ENCODE measurements at regions of chr11 and their contacts with region 1.

Region 1: DNA sequence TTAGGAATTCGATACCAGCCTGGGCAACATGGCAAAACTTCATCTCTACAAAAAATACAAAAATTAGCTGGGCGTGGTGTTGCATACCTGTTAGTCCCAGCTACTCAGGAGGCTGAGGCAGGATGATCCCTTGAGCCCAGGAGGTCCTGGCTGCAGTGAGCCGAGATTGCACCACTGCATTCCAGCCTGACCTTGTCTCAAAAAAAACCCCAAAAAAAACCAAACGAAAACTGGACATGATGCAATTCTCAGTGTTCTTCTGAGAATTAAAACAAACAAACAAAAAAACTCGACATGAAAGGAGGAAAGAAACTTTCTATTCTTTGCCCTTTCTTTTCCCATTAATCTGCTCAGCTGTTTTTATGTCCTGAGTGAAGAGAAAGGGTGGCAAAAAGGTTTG is 7.4 kb downstream of the MED17 start:
- DNase-seq: no peak
- H3K4me3 ChIP-seq: no peak overlapping the region
- H3K27ac ChIP-seq: no peak overlapping the region
- H3K4me1 ChIP-seq: peaks cover 3 to 28% (median 12%) of the 10 kb centered on the region in 6 donors
- H3K27me3 ChIP-seq: no peaks in the 10 kb centered on the region
- CTCF ChIP-seq: no peak
- POLR2A ChIP-seq: no peak

Region 2: DNA sequence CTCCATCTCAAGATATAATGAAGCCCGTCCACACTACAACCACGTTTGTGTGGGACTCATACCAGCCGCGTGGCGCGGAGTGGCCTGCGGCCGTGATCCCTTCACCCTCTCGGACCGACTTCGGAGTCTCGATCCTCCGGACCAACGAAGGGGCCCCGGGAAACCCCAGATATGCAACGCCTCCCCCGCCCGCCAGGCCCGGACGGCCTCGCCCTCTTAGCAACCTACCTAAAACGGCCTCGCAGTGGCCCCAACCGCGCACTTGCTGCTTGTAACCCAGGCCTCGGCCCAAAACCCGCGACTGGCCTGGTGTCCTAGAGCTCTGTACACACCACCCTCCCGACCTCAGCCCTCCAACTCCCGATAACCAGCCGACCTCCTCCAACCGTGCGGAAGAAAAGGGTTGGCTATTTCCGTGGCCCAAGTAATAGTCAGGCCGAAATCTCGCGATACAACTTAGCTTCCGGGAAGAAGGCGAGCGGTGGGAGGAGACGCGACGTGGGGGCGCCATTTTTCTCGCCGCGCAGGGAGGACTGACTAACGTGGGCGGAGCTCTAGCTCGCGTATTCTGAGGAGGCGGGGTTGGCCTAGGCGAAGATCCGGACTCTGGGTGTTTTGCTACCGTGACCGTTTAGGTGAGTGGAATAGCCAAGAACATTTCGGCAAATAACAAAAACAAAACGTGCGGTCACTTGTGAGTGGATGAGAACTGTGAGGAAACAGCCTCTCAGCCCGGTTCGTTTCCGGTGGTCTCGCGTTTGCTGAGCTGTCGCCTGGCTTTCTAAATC is 50.2 kb before region 1 on chr11 and contains the starts of genes C11orf54 and TAF1D:
- intact Hi-C with region 1: loop called (anchors 5 kb)
- DNase-seq: peak; percentile 99
- H3K4me3 ChIP-seq: peak within 1 kb of the TSS; percentile 74 to 90 (median 86)
- H3K27ac ChIP-seq: peak within 1 kb of the TSS; percentile 84 to 97 (median 96)
- H3K4me1 ChIP-seq: peaks cover 25 to 86% (median 59%) of the 10 kb centered on the region in 6 donors
- H3K27me3 ChIP-seq: no peaks in the 10 kb centered on the region
- CTCF ChIP-seq: peak in 7 of 11 experiments; percentile 11 to 53 (median 30)
- POLR2A ChIP-seq: peak; percentile 73 to 88 (median 82)
- total RNA-seq, gene C11orf54: 22.5 to 36.3 (median 28.7) TPM
- total RNA-seq, gene TAF1D: 99.4 to 244 (median 115) TPM

Measured in spleen (tissue), 13 donors.